Psoas muscle (tissue), 8 donors: ENCODE measurements at regions of chr10 and their contacts with region 1.

Region 1: GRCh38 chr10:51422311-51423120 is 276.9 kb downstream of the CSTF2T start:
- DNase-seq: peak in 1 of 2 donors; percentile 44
- ATAC-seq: peak; percentile 74 to 86 (median 79)
- H3K4me3 ChIP-seq: no peak overlapping the region
- H3K27ac ChIP-seq: peak overlapping the region; percentile 56
- H3K4me1 ChIP-seq: peaks cover 23% of the 10 kb centered on the region
- H3K27me3 ChIP-seq: no peaks in the 10 kb centered on the region
- CTCF ChIP-seq: peak; percentile 75

Region 2: GRCh38 chr10:50990568-50991185 is 431.8 kb before region 1 on chr10:
- intact Hi-C with region 1: loop called in 1 of 2 experiments (anchors 10 kb)
- DNase-seq: peak; percentile 51 to 77
- ATAC-seq: peak; percentile 72 to 77 (median 74)
- H3K4me3 ChIP-seq: peak overlapping the region; percentile 94
- H3K27ac ChIP-seq: peak overlapping the region; percentile 95
- H3K4me1 ChIP-seq: peaks cover 19% of the 10 kb centered on the region
- H3K27me3 ChIP-seq: no peaks in the 10 kb centered on the region
- CTCF ChIP-seq: no peak

Region 3: GRCh38 chr10:51074238-51075028 is 348.1 kb before region 1 on chr10 and contains the start of gene PRKG1:
- intact Hi-C with region 1: loop called (anchors 5 to 10 kb)
- DNase-seq: peak; percentile 76 to 84
- ATAC-seq: peak; percentile 84 to 92 (median 86)
- H3K4me3 ChIP-seq: peak within 1 kb of the TSS; percentile 85
- H3K27ac ChIP-seq: peak within 1 kb of the TSS; percentile 64
- H3K4me1 ChIP-seq: peaks cover 19% of the 10 kb centered on the region
- H3K27me3 ChIP-seq: peaks cover 0 to 3% (median 0%) of the 10 kb centered on the region in 3 donors
- CTCF ChIP-seq: no peak
- total RNA-seq, gene PRKG1: 31.7 to 49.0 (median 45.2) TPM